ENCODE measurements at regions of chr6 and their contacts with region 1.

Region 1: GRCh38 chr6:90940812-90941481 is 354.1 kb upstream of the MAP3K7 start:
- DNase-seq: peak in 1 of 2 experiments; percentile 42
- H3K4me3 ChIP-seq: no peak overlapping the region
- H3K27ac ChIP-seq: no peak overlapping the region
- H3K4me1 ChIP-seq: no peaks in the 10 kb centered on the region
- H3K27me3 ChIP-seq: no peaks in the 10 kb centered on the region
- CTCF ChIP-seq: peak; percentile 59; the same call in 1 of the 2 replicates

Region 2: DNA sequence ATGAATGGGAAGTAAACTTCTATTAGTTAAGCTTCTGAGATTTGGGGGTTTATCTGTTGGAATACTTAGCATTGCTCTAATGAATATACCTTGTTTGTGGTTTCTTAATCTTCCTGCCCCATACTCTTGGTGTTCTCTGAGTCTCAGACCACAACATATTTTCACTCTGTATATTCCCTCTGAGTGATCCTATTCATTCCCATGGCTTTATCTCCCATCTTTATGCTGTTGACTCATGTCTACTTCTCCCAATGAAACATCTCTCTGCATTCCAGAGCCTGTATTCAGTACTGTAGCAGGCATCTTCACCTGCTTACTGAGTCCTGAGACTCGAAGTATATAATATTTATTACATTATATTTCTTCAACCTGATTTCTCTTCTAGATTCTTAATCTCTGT is 70.4 kb before region 1 on chr6:
- CTCF ChIA-PET with region 1: no interaction called
- POLR2A ChIA-PET with region 1: no interaction called
- intact Hi-C with region 1: loop called (anchors 5 kb)
- DNase-seq: no peak
- H3K4me3 ChIP-seq: no peak overlapping the region
- H3K27ac ChIP-seq: no peak overlapping the region
- H3K4me1 ChIP-seq: no peaks in the 10 kb centered on the region
- H3K27me3 ChIP-seq: no peaks in the 10 kb centered on the region
- CTCF ChIP-seq: no peak

Region 3: GRCh38 chr6:91081452-91082067 is 140.6 kb after region 1 on chr6:
- CTCF ChIA-PET with region 1: no interaction called
- POLR2A ChIA-PET with region 1: interaction called, 3 read pairs
- intact Hi-C with region 1: loop called (anchors 5 kb)
- DNase-seq: no peak
- H3K4me3 ChIP-seq: no peak overlapping the region
- H3K27ac ChIP-seq: no peak overlapping the region
- H3K4me1 ChIP-seq: no peaks in the 10 kb centered on the region
- H3K27me3 ChIP-seq: no peaks in the 10 kb centered on the region
- CTCF ChIP-seq: peak; percentile 61

Region 4: DNA sequence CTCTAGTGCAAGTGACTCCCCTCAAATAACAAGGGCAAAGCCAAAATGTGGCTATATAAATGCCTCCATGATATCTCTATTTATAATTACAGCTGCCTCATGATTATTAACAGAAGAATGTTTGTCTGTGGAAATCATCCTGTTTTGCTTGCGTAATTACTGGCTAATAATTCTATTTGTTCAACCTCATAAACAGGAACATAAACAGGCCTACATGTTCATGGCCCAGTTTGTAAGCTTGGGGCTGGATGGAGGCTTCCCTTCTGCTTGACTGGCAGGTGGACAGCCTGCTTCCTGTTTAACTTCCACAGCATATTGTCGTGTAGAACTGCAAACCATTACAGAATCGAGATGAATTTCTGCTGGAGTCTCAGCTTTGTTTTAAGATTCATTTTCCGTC is 411.9 kb after region 1 on chr6:
- CTCF ChIA-PET with region 1: interaction called, 16 read pairs
- POLR2A ChIA-PET with region 1: no interaction called
- intact Hi-C with region 1: no loop called
- DNase-seq: no peak
- H3K4me3 ChIP-seq: no peak overlapping the region
- H3K27ac ChIP-seq: no peak overlapping the region
- H3K4me1 ChIP-seq: no peaks in the 10 kb centered on the region
- H3K27me3 ChIP-seq: no peaks in the 10 kb centered on the region
- CTCF ChIP-seq: no peak

Region 5: DNA sequence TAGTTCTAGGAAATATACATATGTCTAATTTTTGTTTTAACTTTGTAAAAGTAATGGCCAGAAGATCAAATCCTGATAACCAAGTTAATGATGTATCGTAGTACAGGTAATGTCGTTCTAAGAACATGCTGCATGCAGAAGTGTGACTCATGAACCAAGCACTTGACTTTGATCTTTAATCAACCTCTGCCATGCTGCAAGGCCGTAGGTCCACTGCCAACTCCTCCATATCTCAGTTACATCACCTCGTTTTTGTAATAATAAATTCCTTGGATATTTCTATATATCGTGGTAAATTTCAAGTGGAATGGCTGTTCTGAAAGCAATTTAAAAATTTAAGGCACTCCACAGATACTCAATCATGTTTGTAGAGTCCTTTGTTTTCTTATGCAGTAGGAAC is 1706.7 kb after region 1 on chr6:
- CTCF ChIA-PET with region 1: no interaction called
- POLR2A ChIA-PET with region 1: no interaction called
- intact Hi-C with region 1: loop called (anchors 5 kb)
- DNase-seq: peak in 1 of 2 experiments; percentile 24
- H3K4me3 ChIP-seq: no peak overlapping the region
- H3K27ac ChIP-seq: no peak overlapping the region
- H3K4me1 ChIP-seq: no peaks in the 10 kb centered on the region
- H3K27me3 ChIP-seq: no peaks in the 10 kb centered on the region
- CTCF ChIP-seq: no peak